T-cell (primary cell): ENCODE measurements at regions of chr10 and their contacts with region 1.

Region 1: GRCh38 chr10:12981570-12981969 is 19.9 kb downstream of the CCDC3 start:
- DNase-seq: no peak
- ATAC-seq: no peak
- H3K4me3 ChIP-seq: no peak overlapping the region
- H3K4me3 Mint-ChIP-seq: no peak overlapping the region
- H3K27ac ChIP-seq: no peak overlapping the region
- H3K27ac Mint-ChIP-seq: no peak overlapping the region
- H3K4me1 ChIP-seq: no peaks in the 10 kb centered on the region
- H3K4me1 Mint-ChIP-seq: no peaks in the 10 kb centered on the region
- H3K27me3 ChIP-seq: peaks cover 0 to 7% of the 10 kb centered on the region in 2 experiments
- H3K27me3 Mint-ChIP-seq: peaks cover 22 to 24% of the 10 kb centered on the region in 2 donors

Region 2: DNA sequence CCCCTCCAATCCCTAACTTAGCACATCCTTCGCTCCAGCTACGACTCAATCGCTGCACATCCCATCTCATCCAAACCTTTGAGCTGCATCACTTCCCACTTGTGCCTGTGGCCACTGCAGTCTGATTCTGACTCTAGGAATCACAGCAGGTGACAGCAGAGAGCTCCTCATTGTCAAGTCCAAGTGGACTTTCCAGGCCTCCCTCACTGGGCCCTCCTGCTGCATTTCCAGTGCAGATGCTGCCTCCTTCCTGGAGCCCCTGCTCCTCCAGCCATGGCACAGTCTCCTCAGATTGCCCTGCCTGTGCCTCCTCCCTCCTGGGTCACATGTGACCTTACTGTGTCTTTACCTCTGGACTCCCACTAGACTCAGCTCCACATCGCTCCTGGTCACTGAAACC is 1527.4 kb before region 1 on chr10:
- CTCF ChIA-PET with region 1: interaction called in 1 of 2 experiments, 14 read pairs
- POLR2A ChIA-PET with region 1: no interaction called
- DNase-seq: no peak
- ATAC-seq: no peak
- H3K4me3 ChIP-seq: no peak overlapping the region
- H3K4me3 Mint-ChIP-seq: no peak overlapping the region
- H3K27ac ChIP-seq: no peak overlapping the region
- H3K27ac Mint-ChIP-seq: no peak overlapping the region
- H3K4me1 ChIP-seq: no peaks in the 10 kb centered on the region
- H3K4me1 Mint-ChIP-seq: no peaks in the 10 kb centered on the region
- H3K27me3 ChIP-seq: no peaks in the 10 kb centered on the region
- H3K27me3 Mint-ChIP-seq: peaks cover 0 to 2% of the 10 kb centered on the region in 2 donors